OCI-LY7 (cell line): ENCODE measurements at regions of chr12 and their contacts with region 1.

Region 1: DNA sequence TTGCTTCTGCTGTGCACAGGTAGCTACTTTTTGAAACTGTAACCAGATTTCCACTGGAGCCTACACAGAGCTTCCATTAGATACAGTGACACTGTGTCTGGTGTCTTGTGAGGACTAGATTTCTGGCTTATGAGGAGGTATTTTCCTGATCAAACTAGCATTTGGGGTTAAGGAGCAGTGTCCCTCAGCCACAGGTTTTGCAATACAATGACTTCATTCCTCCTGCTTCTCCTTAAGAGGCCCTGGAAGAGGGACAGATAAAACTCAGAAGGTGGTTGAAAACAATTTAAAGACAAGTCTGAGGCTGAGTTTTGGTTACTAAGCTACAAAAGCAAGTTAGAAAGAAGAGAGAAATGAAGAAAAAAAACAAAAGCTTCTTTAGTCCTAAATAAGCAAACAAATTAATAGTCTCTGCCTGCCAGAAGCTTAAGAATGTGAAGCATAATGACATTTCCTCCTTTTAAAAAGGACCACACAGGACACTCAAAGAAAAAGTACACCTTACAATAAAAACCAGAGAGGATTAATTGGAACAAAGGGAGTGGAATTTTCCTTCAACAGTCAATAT is 53.0 kb downstream of the PKP2 start:
- DNase-seq: no peak
- H3K4me3 ChIP-seq: no peak overlapping the region
- H3K27ac ChIP-seq: no peak overlapping the region
- H3K4me1 ChIP-seq: no peaks in the 10 kb centered on the region
- CTCF ChIP-seq: no peak

Region 2: DNA sequence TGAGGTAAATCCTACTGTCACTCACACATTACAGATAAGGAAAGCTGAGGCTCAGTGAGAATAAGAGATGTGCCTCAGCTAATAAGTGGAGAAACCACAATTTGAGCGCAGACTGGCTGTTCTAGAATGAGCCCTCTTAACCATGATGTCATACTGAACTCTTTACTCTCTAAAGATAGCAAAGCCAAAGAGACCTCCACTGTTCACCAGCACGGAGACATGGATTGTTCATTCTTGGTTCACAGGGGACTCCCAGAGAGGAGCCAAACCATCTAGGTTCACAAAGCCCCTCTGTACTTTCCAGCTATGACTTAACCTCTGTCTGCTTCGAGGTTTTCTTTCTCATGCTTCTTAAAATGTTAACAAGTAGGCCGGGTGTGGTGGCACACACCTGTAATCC is 55.2 kb before region 1 on chr12:
- CTCF ChIA-PET with region 1: no interaction called
- POLR2A ChIA-PET with region 1: no interaction called
- intact Hi-C with region 1: loop called (anchors 5 kb)
- DNase-seq: no peak
- H3K4me3 ChIP-seq: no peak overlapping the region
- H3K27ac ChIP-seq: no peak overlapping the region
- H3K4me1 ChIP-seq: no peaks in the 10 kb centered on the region
- CTCF ChIP-seq: no peak

Region 3: GRCh38 chr12:32860182-32860581 is 16.6 kb after region 1 on chr12:
- CTCF ChIA-PET with region 1: no interaction called
- POLR2A ChIA-PET with region 1: interaction called, 10 read pairs
- intact Hi-C with region 1: no loop called
- DNase-seq: no peak
- H3K4me3 ChIP-seq: no peak overlapping the region
- H3K27ac ChIP-seq: no peak overlapping the region
- H3K4me1 ChIP-seq: no peaks in the 10 kb centered on the region
- CTCF ChIP-seq: no peak

Region 4: GRCh38 chr12:32896432-32897273 is 53.0 kb after region 1 on chr12 and contains the start of gene PKP2:
- CTCF ChIA-PET with region 1: no interaction called
- POLR2A ChIA-PET with region 1: no interaction called
- intact Hi-C with region 1: no loop called
- DNase-seq: no peak
- H3K4me3 ChIP-seq: no peak within 1 kb of the TSS
- H3K27ac ChIP-seq: no peak within 1 kb of the TSS
- H3K4me1 ChIP-seq: no peaks in the 10 kb centered on the region
- CTCF ChIP-seq: no peak
- total RNA-seq, gene PKP2: not detected in 2 replicates